HCT116 (cell line): ENCODE measurements at regions of chrX and their contacts with region 1.

Region 1: GRCh38 chrX:55057675-55058249 is 17.1 kb upstream of the PAGE2B start:
- DNase-seq: peak; percentile 16
- ATAC-seq: peak; percentile 80
- H3K4me3 ChIP-seq: no peak overlapping the region
- H3K27ac ChIP-seq: no peak overlapping the region
- H3K4me1 ChIP-seq: no peaks in the 10 kb centered on the region
- H3K27me3 ChIP-seq: no peaks in the 10 kb centered on the region
- CTCF ChIP-seq: peak; percentile 44 to 67 (median 65); a peak in 5 of 6 replicates
- POLR2A ChIP-seq: no peak
- RAD21 ChIP-seq: peak; percentile 76

Region 2: DNA sequence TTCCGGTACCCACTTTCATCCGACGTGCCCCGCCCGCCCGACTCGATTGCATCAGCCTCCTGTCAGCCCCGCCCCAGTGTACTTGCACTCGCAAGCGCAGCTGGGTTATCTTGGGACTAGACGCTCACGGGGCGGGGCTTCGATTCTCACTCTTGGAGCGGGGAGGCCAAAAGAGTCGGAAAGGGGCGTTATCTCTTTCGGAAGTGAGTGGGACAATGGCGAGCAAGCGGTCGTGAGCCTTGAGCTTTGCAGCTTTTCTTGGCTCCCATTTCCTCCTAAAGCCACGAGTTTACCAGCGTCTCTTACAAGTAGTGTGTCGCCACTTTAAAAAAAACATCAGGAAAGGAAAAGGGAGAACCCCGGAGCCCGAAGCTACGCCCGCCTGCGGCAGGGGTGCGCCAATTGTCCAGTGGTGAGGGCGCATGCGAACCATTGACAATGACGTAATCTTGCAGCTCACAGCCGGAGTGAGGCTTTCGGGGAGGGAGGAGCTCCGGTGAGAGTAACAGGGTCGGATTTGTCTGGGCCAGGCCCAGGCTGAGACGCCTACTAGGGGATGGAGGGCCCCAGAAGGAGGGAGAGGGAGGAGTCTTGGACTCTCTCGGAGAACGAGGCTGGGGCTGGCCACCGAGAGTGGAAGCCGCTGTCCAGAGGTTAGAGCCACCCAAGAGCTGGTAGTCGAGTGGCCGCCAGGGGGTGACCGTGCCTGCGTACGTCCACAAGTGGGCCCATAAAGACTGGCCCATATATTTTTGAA is 418.2 kb before region 1 on chrX:
- CTCF ChIA-PET with region 1: interaction called, 3 read pairs
- POLR2A ChIA-PET with region 1: no interaction called
- RAD21 ChIA-PET with region 1: no interaction called
- intact Hi-C with region 1: loop called (anchors 10 kb)
- DNase-seq: peak; percentile 90
- ATAC-seq: peak; percentile 95
- H3K4me3 ChIP-seq: peak overlapping the region; percentile 46 to 56
- H3K27ac ChIP-seq: peak overlapping the region; percentile 91
- H3K4me1 ChIP-seq: peaks cover 15% of the 10 kb centered on the region in 2 experiments; a peak in 3 of 4 replicates
- H3K27me3 ChIP-seq: no peaks in the 10 kb centered on the region
- CTCF ChIP-seq: peak; percentile 51 to 59 (median 56); a peak in 5 of 6 replicates
- POLR2A ChIP-seq: no peak
- RAD21 ChIP-seq: peak; percentile 62

Region 3: DNA sequence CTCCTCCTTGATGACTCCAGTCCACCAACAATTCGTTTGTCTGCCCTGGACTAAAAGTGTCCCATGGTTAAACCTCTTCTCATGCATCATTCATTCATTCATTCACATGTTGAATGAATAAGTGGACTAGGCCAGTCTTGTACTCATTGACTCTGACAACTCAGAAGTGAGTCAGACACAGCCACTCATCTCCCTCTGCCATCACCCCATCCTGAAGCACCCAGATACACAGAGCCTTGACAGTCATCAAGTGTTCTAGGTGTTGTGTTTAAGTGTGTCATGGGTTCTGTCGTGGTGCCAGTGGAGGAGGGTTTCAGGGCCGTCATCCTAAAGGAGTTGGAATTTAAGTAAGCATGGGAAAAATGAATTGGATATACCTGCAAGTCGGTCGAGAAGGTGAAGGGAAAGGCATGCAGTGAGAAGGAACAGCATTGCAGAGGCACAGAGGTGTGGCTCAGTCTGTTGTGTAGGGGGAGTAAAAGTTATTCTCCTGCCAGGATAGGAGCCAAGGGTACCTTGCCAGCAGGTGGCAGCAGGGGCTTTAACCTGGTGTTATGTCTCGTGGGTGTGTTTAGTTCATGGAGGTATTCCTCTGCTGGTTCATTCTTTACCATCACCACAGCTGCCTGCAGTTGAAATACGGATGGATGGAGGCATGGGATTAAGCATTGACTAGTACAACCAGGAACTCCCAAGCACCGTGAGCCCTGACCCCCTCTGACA is 231.9 kb before region 1 on chrX:
- CTCF ChIA-PET with region 1: no interaction called
- POLR2A ChIA-PET with region 1: no interaction called
- RAD21 ChIA-PET with region 1: no interaction called
- intact Hi-C with region 1: loop called (anchors 5 kb)
- DNase-seq: no peak
- ATAC-seq: peak; percentile 82
- H3K4me3 ChIP-seq: no peak overlapping the region
- H3K27ac ChIP-seq: no peak overlapping the region
- H3K4me1 ChIP-seq: no peaks in the 10 kb centered on the region
- H3K27me3 ChIP-seq: no peaks in the 10 kb centered on the region
- CTCF ChIP-seq: peak in 2 of 3 experiments; percentile 28 to 34; a peak in 2 of 6 replicates
- POLR2A ChIP-seq: no peak
- RAD21 ChIP-seq: peak; percentile 42; the same call in 1 of the 2 replicates

Region 4: GRCh38 chrX:54891573-54891972 is 166.2 kb before region 1 on chrX:
- CTCF ChIA-PET with region 1: interaction called, 5 read pairs
- POLR2A ChIA-PET with region 1: no interaction called
- RAD21 ChIA-PET with region 1: no interaction called
- intact Hi-C with region 1: loop called (anchors 1 kb)
- DNase-seq: peak; percentile 23
- ATAC-seq: peak; percentile 72
- H3K4me3 ChIP-seq: no peak overlapping the region
- H3K27ac ChIP-seq: no peak overlapping the region
- H3K4me1 ChIP-seq: no peaks in the 10 kb centered on the region
- H3K27me3 ChIP-seq: no peaks in the 10 kb centered on the region
- CTCF ChIP-seq: peak; percentile 20 to 48 (median 46); a peak in 4 of 6 replicates
- POLR2A ChIP-seq: no peak
- RAD21 ChIP-seq: peak; percentile 58